Endothelial cell of umbilical vein (primary cell): ENCODE measurements at regions of chr19 and their contacts with region 1.

Region 1: DNA sequence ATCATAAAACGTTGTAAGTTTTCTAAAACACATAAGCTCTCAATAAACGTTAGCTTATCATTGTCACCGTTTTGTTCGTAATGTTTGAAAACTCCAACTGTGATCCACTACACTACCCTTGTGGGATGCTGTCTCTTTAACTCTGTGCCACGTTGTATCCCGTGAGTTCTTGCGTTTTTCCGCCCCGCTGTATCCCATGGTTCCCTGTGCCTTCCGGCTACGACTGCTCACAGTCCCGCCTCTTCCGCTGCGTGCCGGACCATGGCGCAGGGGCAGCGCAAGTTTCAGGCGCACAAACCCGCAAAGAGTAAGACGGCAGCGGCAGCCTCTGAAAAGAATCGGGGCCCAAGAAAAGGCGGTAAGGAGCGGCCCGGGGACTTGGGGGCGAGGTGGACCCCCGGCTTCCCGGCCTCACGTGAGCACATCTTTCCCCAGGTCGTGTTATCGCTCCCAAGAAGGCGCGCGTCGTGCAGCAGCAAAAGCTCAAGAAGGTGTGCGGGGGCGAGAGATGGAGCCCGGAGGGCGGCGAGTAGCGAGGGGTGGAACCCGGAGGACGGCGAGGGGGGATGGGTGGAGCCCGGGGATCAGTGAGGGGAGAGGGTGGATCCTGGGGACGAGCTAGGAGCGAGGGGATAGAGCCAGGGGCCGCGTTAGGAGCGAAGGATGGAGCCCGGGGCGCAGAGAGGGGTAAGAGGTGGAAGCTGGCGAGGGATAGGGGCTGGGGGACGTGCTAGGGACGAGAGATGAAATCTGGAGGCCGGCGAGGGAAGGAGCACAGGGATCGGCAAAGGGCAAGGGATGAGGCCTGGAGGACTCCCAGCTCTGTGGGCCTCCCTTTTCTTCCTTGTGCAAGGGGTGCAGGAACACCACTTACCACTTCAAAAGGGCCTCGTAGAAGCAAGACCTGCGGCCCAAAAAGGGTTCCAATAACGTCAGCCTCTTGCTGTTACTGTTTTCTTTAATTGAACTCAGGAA is at the start of gene C19orf53:
- DNase-seq: peak; percentile 95
- H3K4me3 ChIP-seq: peak within 1 kb of the TSS; percentile 63 to 77 (median 75)
- H3K27ac ChIP-seq: peak within 1 kb of the TSS; percentile 62
- H3K4me1 ChIP-seq: peaks cover 9% of the 10 kb centered on the region
- H3K27me3 ChIP-seq: no peaks in the 10 kb centered on the region
- CTCF ChIP-seq: no peak
- POLR2A ChIP-seq: peak; percentile 86
- total RNA-seq, gene C19orf53: 113 and 126 TPM in 2 replicates

Region 2: DNA sequence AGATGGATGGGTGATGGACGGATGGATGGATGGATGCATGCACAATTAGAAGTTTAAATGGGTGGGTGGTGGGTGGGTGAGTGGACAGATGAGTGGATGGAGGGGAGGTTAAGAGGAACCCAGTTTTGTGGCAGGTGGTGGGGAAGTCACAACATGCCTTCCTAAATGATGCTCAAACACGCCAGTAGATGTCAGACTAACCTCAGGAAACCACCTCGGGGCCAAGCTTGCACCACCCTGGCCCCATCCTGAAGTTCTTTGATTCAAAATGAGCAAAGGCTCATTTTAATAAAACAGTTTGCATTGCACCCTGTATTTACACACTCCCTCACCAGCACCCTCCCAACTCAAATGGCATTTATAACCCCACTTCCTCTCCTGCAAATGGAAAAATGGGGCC is 176.9 kb before region 1 on chr19:
- CTCF ChIA-PET with region 1: no interaction called
- POLR2A ChIA-PET with region 1: no interaction called
- dilution Hi-C with region 1: no loop called
- intact Hi-C with region 1: loop called (anchors 2 kb)
- DNase-seq: peak; percentile 66
- H3K4me3 ChIP-seq: no peak overlapping the region
- H3K27ac ChIP-seq: no peak overlapping the region
- H3K4me1 ChIP-seq: no peaks in the 10 kb centered on the region
- H3K27me3 ChIP-seq: no peaks in the 10 kb centered on the region
- CTCF ChIP-seq: peak; percentile 39 to 61
- POLR2A ChIP-seq: no peak

Region 3: GRCh38 chr19:13764101-13764807 is 10.2 kb before region 1 on chr19 and contains the start of gene MRI1:
- CTCF ChIA-PET with region 1: interaction called, 5 read pairs
- POLR2A ChIA-PET with region 1: interaction called, 3 read pairs
- dilution Hi-C with region 1: no loop called
- intact Hi-C with region 1: loop called (anchors 1 kb)
- DNase-seq: peak; percentile 70
- H3K4me3 ChIP-seq: peak within 1 kb of the TSS; percentile 56 to 79 (median 65)
- H3K27ac ChIP-seq: peak within 1 kb of the TSS; percentile 35
- H3K4me1 ChIP-seq: peaks cover 12% of the 10 kb centered on the region
- H3K27me3 ChIP-seq: no peaks in the 10 kb centered on the region
- CTCF ChIP-seq: no peak
- POLR2A ChIP-seq: peak; percentile 83
- total RNA-seq, gene MRI1: 42.3 and 56.2 TPM in 2 replicates

Region 4: GRCh38 chr19:13794757-13795589 is 20.5 kb after region 1 on chr19 and contains the start of gene ZSWIM4:
- CTCF ChIA-PET with region 1: interaction called, 6 read pairs
- POLR2A ChIA-PET with region 1: interaction called, 9 read pairs
- dilution Hi-C with region 1: no loop called
- intact Hi-C with region 1: loop called (anchors 1 kb)
- DNase-seq: peak; percentile 100
- H3K4me3 ChIP-seq: peak within 1 kb of the TSS; percentile 72 to 97 (median 87)
- H3K27ac ChIP-seq: peak within 1 kb of the TSS; percentile 95
- H3K4me1 ChIP-seq: peaks cover 20% of the 10 kb centered on the region
- H3K27me3 ChIP-seq: no peaks in the 10 kb centered on the region
- CTCF ChIP-seq: no peak
- POLR2A ChIP-seq: peak; percentile 5
- total RNA-seq, gene ZSWIM4: 23.1 and 26.6 TPM in 2 replicates